PC-3 (cell line): ENCODE measurements at regions of chr20 and their contacts with region 1.

Region 1: DNA sequence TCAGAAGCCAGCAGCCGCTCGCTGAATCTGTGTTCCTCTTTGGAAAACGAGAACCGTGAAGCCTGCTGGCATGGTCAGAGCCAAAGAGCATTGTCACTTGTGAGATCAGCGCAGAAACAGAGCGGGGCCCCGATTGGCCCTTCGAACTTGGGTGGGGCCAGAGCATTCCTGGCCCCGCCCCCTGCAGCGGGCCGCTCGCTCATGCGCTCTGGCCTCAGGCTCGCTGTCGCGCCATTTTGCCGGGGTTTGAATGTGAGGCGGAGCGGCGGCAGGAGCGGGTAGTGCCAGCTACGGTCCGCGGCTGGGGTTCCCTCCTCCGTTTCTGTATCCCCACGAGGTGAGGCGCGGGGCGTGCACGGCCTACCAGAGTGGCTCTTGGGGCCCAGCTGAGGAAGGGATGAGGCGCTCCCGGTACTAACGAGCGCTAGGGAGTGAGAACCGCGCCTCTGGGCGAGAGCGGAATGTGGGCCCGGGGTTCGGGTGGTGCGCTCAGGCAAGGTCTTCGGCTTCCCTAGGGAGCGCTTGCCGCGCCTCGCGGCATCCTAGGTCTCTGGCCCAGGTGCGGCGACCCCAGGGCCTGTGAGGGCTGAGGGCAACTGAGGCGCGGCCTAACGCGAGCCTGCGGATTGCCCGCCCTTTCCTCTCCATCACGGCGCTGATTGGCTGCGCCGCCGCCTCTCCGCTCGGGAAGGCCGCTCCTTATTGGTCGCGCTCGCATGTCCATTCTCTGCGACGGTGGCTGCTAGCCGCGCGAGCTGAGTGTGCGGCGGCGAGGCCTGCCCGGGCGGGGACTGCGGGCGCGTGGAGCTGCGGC is at the start of gene CSE1L:
- DNase-seq: peak; percentile 99
- ATAC-seq: peak; percentile 92
- H3K4me3 ChIP-seq: peak within 1 kb of the TSS; percentile 96
- H3K27ac ChIP-seq: peak within 1 kb of the TSS; percentile 73
- H3K4me1 ChIP-seq: peaks cover 25% of the 10 kb centered on the region
- H3K27me3 ChIP-seq: no peaks in the 10 kb centered on the region
- CTCF ChIP-seq: no peak
- total RNA-seq, gene CSE1L: 272 and 295 TPM in 2 replicates

Region 2: DNA sequence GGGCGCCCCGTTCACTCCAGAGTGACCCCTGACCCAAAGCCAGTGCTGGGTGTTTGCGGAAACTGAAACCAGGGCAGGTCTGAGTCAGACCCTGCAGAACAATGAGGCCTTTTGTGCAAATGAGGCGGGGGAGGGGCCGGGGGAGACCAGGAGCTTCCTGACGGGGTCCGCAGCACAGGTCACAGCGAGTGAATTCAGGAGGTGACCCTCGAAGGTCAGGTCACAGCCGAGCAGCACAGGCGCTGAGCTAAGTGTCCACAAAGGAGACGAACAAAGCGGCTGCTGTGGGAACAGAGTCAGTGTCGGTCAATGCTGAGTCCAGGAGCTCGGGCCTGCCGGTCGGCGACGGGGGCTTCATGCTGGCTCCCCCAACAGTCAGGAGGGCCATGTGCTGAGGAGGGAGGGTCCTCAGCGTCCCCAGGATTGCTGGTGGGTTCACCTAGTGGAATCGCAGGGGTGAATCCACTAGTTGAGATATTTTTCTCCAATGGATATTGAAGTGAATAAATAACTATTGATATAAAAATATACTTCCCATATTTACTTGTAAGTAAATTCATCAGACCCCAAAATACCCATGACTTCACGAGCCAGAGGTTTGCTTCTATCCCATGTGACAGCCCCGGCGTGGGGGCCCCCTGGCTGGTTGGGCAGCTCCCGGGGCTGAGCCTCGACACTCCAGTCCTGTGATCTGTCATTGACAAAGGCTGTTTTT is 1072.6 kb before region 1 on chr20:
- CTCF ChIA-PET with region 1: no interaction called
- POLR2A ChIA-PET with region 1: interaction called, 12 read pairs
- intact Hi-C with region 1: no loop called
- DNase-seq: peak; percentile 77
- ATAC-seq: peak; percentile 80
- H3K4me3 ChIP-seq: no peak overlapping the region
- H3K27ac ChIP-seq: peak overlapping the region; percentile 89
- H3K4me1 ChIP-seq: peaks cover 41% of the 10 kb centered on the region
- H3K27me3 ChIP-seq: no peaks in the 10 kb centered on the region
- CTCF ChIP-seq: no peak